Activated naive CD4-positive, alpha-beta T cell treated with anti-CD3 and anti-CD28 coated beads, Interleukin-2, amount 10 ng/mL, durations not matched to agents 7 days and 5 days (primary cell): ENCODE measurements at regions of chr6 and their contacts with region 1.

Region 1: DNA sequence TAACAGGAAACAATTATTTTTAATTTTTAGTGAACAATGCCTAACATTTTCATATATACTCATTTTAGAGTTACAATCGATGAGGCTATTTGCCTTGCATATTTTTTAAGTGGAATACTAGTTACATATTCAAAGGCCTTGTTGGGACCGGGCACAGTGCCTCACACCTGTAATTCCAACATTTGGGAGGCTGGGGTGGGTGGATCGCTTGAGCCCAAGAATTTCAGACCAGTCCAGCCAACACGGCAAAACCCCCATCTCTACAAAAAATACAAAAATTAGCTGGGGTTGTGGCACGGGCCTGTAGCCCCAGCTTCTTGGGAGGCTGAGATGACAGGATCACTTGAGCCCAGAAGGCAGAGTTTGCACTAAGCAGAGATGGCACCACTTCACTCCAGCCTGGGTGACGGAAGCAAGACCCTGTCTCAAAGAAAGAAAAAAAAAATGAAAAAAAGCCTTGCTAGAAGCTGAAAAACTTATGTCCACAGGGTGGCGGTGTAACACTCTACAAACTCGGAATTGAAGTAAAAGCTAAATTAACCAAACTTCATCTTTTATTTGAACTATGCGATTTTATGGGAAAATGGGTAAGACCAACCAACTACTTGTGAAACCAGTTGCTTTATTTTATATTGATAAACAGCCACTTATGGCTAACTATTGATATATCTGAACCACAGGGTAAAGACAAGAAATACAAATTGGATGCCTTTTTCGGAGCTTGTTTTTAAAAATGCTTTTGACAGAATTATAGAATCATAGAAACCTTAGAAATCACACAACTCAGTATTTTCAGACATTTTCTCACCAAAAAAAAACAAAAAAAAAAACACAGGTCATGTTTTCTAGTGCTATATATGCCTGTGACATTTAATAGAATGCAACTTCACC is 24.1 kb upstream of the ROS1 start:
- DNase-seq: peak; percentile 73
- H3K4me3 Mint-ChIP-seq: no peak overlapping the region
- H3K27ac Mint-ChIP-seq: no peak overlapping the region
- H3K4me1 Mint-ChIP-seq: no peaks in the 10 kb centered on the region
- H3K27me3 Mint-ChIP-seq: peaks cover 33% of the 10 kb centered on the region

Region 2: DNA sequence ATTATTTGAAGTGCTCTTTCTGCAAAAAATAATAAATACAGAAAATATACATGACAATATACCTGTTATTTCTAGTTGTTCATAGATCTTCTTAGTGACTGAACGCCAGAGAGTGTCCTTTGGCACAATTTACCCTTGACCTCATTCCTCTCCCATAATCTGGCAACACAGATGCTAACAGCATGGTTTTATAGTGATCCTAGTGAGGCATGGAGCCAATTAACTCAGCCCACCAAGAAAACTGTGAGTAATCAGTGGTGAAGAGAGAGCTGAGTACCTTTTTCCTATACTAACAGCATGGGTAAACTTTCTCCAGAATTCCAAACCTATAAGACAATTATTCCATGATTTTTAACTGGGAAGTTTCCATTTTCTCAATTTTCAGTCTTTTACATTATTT is 123.4 kb before region 1 on chr6:
- CTCF ChIA-PET with region 1: no interaction called
- DNase-seq: no peak
- H3K4me3 Mint-ChIP-seq: no peak overlapping the region
- H3K27ac Mint-ChIP-seq: no peak overlapping the region
- H3K4me1 Mint-ChIP-seq: no peaks in the 10 kb centered on the region
- H3K27me3 Mint-ChIP-seq: no peaks in the 10 kb centered on the region

Region 3: GRCh38 chr6:117555882-117556498 is 106.2 kb after region 1 on chr6:
- CTCF ChIA-PET with region 1: interaction called, 105 read pairs
- DNase-seq: peak; percentile 64
- H3K4me3 Mint-ChIP-seq: no peak overlapping the region
- H3K27ac Mint-ChIP-seq: no peak overlapping the region
- H3K4me1 Mint-ChIP-seq: peaks cover 1% of the 10 kb centered on the region
- H3K27me3 Mint-ChIP-seq: peaks cover 3% of the 10 kb centered on the region